ENCODE measurements at regions of chr5 and their contacts with region 1.

Region 1: DNA sequence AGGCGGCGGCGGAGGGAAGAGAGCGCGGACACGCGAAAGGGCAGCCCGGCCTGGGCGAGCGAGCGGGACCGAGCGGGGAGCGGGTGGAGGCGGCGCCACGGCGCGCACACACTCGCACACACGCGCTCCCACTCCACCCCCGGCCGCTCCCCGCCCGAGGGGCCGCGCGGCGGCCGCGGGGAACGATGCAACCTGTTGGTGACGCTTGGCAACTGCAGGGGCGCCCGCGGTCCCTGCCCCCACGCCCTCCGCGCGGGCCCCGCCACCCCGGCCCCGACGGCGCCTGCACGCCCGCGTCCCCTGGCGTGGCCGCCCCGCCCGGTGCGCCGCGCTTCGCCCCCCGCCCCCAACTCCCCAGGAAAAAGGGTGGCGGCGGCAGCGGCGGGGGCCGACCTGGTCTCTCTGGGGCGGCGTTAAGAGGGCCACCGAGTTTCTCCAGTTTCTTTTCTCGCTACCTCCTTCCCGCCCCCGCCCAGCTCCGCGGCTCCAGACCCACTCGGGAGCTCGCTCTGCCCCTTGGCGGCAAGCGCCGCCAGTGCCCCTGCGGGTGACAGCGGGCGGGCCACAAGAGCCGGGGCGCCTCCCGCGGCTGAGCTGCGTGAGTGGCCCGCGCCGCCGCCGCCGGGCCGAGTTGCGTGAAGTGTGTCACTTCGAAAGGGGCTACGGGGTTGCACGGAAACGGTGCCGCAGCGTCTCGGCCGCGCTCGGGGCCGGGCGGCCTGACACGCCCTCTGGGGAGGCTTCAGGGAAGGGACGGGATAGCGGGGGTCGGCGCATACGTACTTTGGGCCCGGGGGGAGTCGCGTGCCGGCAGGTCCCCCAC is at the start of gene NR3C1:
- DNase-seq: peak; percentile 86
- H3K4me3 Mint-ChIP-seq: peak within 1 kb of the TSS; percentile 98
- H3K27ac Mint-ChIP-seq: peak within 1 kb of the TSS; percentile 99
- H3K4me1 Mint-ChIP-seq: peaks cover 29% of the 10 kb centered on the region
- H3K27me3 Mint-ChIP-seq: no peaks in the 10 kb centered on the region
- CTCF ChIP-seq: peak; percentile 59
- total RNA-seq, gene NR3C1: 92.9 and 113 TPM in 2 replicates

Region 2: GRCh38 chr5:143002459-143003328 is 401.1 kb before region 1 on chr5:
- CTCF ChIA-PET with region 1: interaction called, 17 read pairs
- POLR2A ChIA-PET with region 1: interaction called, 41 read pairs
- intact Hi-C with region 1: loop called (anchors 1 kb)
- DNase-seq: peak; percentile 96
- H3K4me3 Mint-ChIP-seq: no peak overlapping the region
- H3K27ac Mint-ChIP-seq: peak overlapping the region; percentile 92
- H3K4me1 Mint-ChIP-seq: peaks cover 29% of the 10 kb centered on the region
- H3K27me3 Mint-ChIP-seq: no peaks in the 10 kb centered on the region
- CTCF ChIP-seq: peak; percentile 72

Region 3: DNA sequence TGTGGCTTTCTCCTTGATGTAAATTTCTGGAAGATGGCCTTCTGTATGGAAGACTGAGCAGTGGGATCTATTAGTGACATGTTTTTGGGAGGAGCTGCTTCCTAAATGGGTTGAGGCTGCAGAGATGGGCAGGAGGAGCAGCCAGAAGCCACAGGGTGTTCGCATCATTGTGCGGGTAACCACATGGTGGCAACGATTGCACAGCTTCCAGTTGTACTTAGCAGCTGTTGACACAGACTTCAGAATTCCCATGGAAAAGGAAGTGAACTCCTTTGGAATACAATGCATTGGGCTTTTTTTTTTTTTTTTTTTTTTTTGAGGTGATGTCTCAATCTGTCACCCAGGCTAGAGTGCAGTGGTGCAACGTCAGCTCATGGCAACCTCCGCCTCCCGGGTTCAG is 297.6 kb before region 1 on chr5:
- CTCF ChIA-PET with region 1: interaction called, 7 read pairs
- POLR2A ChIA-PET with region 1: interaction called, 7 read pairs
- intact Hi-C with region 1: loop called (anchors 1 kb)
- DNase-seq: peak; percentile 79
- H3K4me3 Mint-ChIP-seq: no peak overlapping the region
- H3K27ac Mint-ChIP-seq: no peak overlapping the region
- H3K4me1 Mint-ChIP-seq: peaks cover 5% of the 10 kb centered on the region
- H3K27me3 Mint-ChIP-seq: no peaks in the 10 kb centered on the region
- CTCF ChIP-seq: peak; percentile 33

Region 4: GRCh38 chr5:143200781-143201398 is 202.9 kb before region 1 on chr5:
- CTCF ChIA-PET with region 1: interaction called, 4 read pairs
- POLR2A ChIA-PET with region 1: interaction called, 30 read pairs
- intact Hi-C with region 1: loop called (anchors 2 kb)
- DNase-seq: peak; percentile 97
- H3K4me3 Mint-ChIP-seq: peak overlapping the region; percentile 15
- H3K27ac Mint-ChIP-seq: peak overlapping the region; percentile 84
- H3K4me1 Mint-ChIP-seq: peaks cover 45% of the 10 kb centered on the region
- H3K27me3 Mint-ChIP-seq: no peaks in the 10 kb centered on the region
- CTCF ChIP-seq: no peak

Region 5: GRCh38 chr5:143376911-143377813 is 26.6 kb before region 1 on chr5:
- CTCF ChIA-PET with region 1: interaction called, 5 read pairs
- POLR2A ChIA-PET with region 1: interaction called, 10 read pairs
- intact Hi-C with region 1: no loop called
- DNase-seq: peak; percentile 72
- H3K4me3 Mint-ChIP-seq: no peak overlapping the region
- H3K27ac Mint-ChIP-seq: peak overlapping the region; percentile 20
- H3K4me1 Mint-ChIP-seq: peaks cover 31% of the 10 kb centered on the region
- H3K27me3 Mint-ChIP-seq: no peaks in the 10 kb centered on the region
- CTCF ChIP-seq: no peak

Region 6: DNA sequence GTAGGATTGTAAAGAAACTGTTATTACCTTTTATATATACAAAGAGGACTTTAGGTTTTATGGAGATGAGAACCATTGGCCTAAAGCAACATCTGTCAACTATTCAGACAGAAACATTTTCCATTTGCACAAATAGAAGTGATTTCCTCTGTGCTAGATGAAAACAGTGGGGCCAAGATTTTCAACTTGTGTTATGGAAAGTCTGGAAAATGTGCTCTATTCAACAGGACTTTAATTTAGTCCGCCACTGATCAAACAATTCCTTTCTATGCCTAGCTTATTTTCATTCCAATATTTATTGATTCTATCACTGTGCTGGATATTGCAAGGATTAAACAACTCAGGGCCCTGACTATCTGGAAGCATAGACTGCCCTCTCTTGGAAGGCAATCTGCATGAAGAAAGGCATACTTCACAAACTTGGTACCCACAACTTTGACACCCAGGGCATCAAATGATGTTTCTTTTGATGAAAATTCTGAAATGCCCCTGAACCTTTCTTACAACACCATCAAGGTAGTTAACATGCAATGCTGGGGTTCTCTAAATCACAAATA is 281.5 kb after region 1 on chr5:
- CTCF ChIA-PET with region 1: interaction called, 13 read pairs
- POLR2A ChIA-PET with region 1: interaction called, 4 read pairs
- intact Hi-C with region 1: loop called (anchors 1 kb)
- DNase-seq: peak; percentile 49
- H3K4me3 Mint-ChIP-seq: no peak overlapping the region
- H3K27ac Mint-ChIP-seq: no peak overlapping the region
- H3K4me1 Mint-ChIP-seq: no peaks in the 10 kb centered on the region
- H3K27me3 Mint-ChIP-seq: no peaks in the 10 kb centered on the region
- CTCF ChIP-seq: peak; percentile 51

Region 7: DNA sequence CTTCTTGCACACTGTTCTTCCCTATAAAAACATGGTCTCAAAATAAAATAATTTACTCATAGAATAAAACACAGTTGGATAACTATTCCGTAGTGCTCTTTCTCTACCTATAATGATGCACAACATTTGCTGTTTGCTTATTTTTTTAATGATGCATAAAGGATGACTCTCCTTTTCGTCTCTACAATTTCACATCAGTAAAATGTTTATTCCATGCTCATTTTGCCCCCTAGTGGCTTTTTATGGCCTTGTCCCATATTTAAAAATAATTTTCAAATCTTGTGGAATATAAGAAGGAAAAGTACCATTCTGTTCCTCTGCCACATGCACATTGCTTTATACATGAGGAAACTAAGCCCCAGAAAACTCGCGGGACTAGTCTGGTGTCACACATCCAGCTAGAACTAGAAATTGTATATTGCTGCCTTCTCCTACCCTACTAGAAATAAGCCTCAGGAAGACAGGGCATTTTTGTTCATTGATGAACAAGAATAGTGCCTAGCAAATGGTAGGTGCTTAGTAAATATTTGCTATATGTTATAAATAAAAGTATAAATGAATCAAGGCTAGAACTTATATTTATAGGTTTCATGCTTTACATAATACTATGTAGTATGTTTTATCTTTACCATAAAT is 779.6 kb after region 1 on chr5:
- CTCF ChIA-PET with region 1: no interaction called
- POLR2A ChIA-PET with region 1: interaction called, 3 read pairs
- intact Hi-C with region 1: loop called (anchors 1 kb)
- DNase-seq: peak; percentile 64
- H3K4me3 Mint-ChIP-seq: no peak overlapping the region
- H3K27ac Mint-ChIP-seq: no peak overlapping the region
- H3K4me1 Mint-ChIP-seq: peaks cover 14% of the 10 kb centered on the region
- H3K27me3 Mint-ChIP-seq: no peaks in the 10 kb centered on the region
- CTCF ChIP-seq: peak; percentile 74